ENCODE measurements at regions of chr12 and their contacts with region 1.

Region 1: GRCh38 chr12:45543906-45544315 is 185.6 kb upstream of the ARID2 start:
- DNase-seq: peak; percentile 55
- H3K4me3 ChIP-seq: no peak overlapping the region
- H3K27ac ChIP-seq: no peak overlapping the region
- H3K4me1 ChIP-seq: no peaks in the 10 kb centered on the region
- H3K27me3 ChIP-seq: no peaks in the 10 kb centered on the region
- CTCF ChIP-seq: peak; percentile 77 to 88

Region 2: GRCh38 chr12:45745861-45746277 is 202.0 kb after region 1 on chr12:
- CTCF ChIA-PET with region 1: interaction called, 4 read pairs
- dilution Hi-C with region 1: no loop called
- in situ Hi-C with region 1: no loop called
- intact Hi-C with region 1: loop called (anchors 1 kb)
- DNase-seq: peak; percentile 24
- H3K4me3 ChIP-seq: no peak overlapping the region
- H3K27ac ChIP-seq: no peak overlapping the region
- H3K4me1 ChIP-seq: no peaks in the 10 kb centered on the region
- H3K27me3 ChIP-seq: no peaks in the 10 kb centered on the region
- CTCF ChIP-seq: peak; percentile 22 to 35

Region 3: DNA sequence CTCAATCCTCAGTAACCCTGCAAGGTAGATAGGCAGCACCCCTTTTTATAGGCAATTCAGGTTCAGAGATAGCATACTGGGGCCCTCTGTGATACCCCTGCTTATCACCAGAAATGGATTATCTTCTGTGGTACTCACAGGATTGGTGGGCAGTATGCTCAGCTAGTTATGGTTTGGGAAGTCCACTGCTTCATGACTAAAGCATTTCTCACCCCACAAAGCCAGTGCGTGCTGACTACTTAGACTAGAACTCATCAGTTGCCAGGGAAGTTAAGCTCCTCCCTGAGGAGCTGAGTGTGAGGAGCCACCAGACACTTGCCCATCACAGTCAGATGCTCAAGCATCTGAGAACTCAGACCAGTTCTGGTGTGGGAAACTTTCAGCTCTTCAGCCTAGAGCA is 370.2 kb after region 1 on chr12:
- CTCF ChIA-PET with region 1: no interaction called
- dilution Hi-C with region 1: no loop called
- in situ Hi-C with region 1: no loop called
- intact Hi-C with region 1: loop called (anchors 5 kb)
- DNase-seq: peak; percentile 75
- H3K4me3 ChIP-seq: no peak overlapping the region
- H3K27ac ChIP-seq: no peak overlapping the region
- H3K4me1 ChIP-seq: no peaks in the 10 kb centered on the region
- H3K27me3 ChIP-seq: no peaks in the 10 kb centered on the region
- CTCF ChIP-seq: no peak

Region 4: GRCh38 chr12:46005151-46005797 is 461.4 kb after region 1 on chr12:
- CTCF ChIA-PET with region 1: no interaction called
- dilution Hi-C with region 1: no loop called
- in situ Hi-C with region 1: no loop called
- intact Hi-C with region 1: loop called (anchors 5 kb)
- DNase-seq: no peak
- H3K4me3 ChIP-seq: no peak overlapping the region
- H3K27ac ChIP-seq: no peak overlapping the region
- H3K4me1 ChIP-seq: no peaks in the 10 kb centered on the region
- H3K27me3 ChIP-seq: no peaks in the 10 kb centered on the region
- CTCF ChIP-seq: peak; percentile 35 to 41